Tibial artery (tissue), 4 donors: ENCODE measurements at regions of chr5 and their contacts with region 1.

Region 1: GRCh38 chr5:173895401-173896165 is 7.4 kb downstream of the CPEB4 start:
- DNase-seq: no peak
- H3K4me3 ChIP-seq: no peak overlapping the region
- H3K27ac ChIP-seq: no peak overlapping the region
- H3K4me1 ChIP-seq: peaks cover 0 to 79% (median 14%) of the 10 kb centered on the region in 4 donors
- H3K27me3 ChIP-seq: no peaks in the 10 kb centered on the region
- CTCF ChIP-seq: no peak

Region 2: DNA sequence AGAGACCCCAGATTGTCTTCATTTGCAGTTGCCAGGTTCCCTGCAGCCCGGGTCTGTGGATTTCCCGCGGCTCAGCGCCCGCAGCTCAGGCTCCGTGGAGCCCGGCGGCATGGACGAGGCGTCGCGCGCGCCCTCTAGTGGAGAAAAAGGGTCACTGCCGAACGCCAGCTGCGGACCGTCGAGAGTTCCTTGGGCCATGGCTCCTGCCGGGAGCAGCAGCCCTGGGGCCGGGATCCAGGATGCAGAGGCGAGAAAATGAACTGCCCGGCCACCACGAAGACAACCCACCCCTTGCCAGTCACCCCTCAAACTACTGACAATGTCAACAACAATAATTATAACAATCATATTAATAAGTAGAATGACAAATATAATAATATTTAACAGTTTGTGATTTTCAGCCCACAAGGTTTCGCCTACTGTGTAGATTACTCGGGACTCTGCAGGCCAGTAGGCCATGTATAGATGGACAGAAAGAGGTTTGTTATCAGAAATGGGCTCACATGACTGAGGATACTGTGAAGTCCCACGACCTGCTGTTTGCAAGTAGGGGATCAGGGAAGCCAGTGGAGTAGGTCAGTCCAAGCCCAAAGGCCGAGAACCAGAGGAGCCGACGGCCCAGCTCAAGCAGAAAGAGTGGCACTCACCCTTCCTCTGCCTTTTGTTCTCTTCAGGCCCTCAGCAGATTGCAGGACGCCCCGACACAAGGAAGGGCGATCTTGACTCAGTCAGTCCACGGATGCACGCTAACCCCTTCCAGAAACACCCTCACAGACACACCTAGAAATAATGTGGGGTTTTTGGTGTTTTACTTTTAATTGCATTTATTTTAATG is 322.2 kb before region 1 on chr5:
- intact Hi-C with region 1: no loop called
- DNase-seq: peak; percentile 35 to 85
- H3K4me3 ChIP-seq: peak overlapping the region in 1 of 2 donors; percentile 0
- H3K27ac ChIP-seq: no peak overlapping the region
- H3K4me1 ChIP-seq: peaks cover 0 to 7% (median 0%) of the 10 kb centered on the region in 4 donors
- H3K27me3 ChIP-seq: no peaks in the 10 kb centered on the region
- CTCF ChIP-seq: peak; percentile 94 to 98

Region 3: GRCh38 chr5:173907686-173908371 is 12.2 kb after region 1 on chr5:
- intact Hi-C with region 1: loop called (anchors 1 kb)
- DNase-seq: no peak
- H3K4me3 ChIP-seq: no peak overlapping the region
- H3K27ac ChIP-seq: peak overlapping the region in 1 of 2 donors; percentile 9
- H3K4me1 ChIP-seq: peaks cover 0 to 76% (median 30%) of the 10 kb centered on the region in 4 donors
- H3K27me3 ChIP-seq: no peaks in the 10 kb centered on the region
- CTCF ChIP-seq: no peak

Region 4: GRCh38 chr5:173997331-173997730 is 101.7 kb after region 1 on chr5:
- intact Hi-C with region 1: no loop called
- DNase-seq: no peak
- H3K4me3 ChIP-seq: no peak overlapping the region
- H3K27ac ChIP-seq: no peak overlapping the region
- H3K4me1 ChIP-seq: no peaks in the 10 kb centered on the region
- H3K27me3 ChIP-seq: peaks cover 0 to 20% of the 10 kb centered on the region in 2 donors
- CTCF ChIP-seq: no peak